H1 (cell line): ENCODE measurements at regions of chr4 and their contacts with region 1.

Region 1: GRCh38 chr4:169152899-169153298 is 117.9 kb downstream of the SH3RF1 start:
- DNase-seq: no peak
- H3K4me3 ChIP-seq: no peak overlapping the region
- H3K27ac ChIP-seq: no peak overlapping the region
- H3K4me1 ChIP-seq: peaks cover 0 to 3% (median 0%) of the 10 kb centered on the region in 4 experiments; a peak in 1 of 7 replicates
- H3K27me3 ChIP-seq: no peaks in the 10 kb centered on the region
- CTCF ChIP-seq: peak; percentile 35 to 44 (median 38)
- EP300 ChIP-seq: no peak
- POLR2A ChIP-seq: no peak
- RAD21 ChIP-seq: peak; percentile 32 to 54

Region 2: GRCh38 chr4:169139021-169139420 is 13.9 kb before region 1 on chr4:
- CTCF ChIA-PET with region 1: interaction called, 17 read pairs
- POLR2A ChIA-PET with region 1: no interaction called
- DNase-seq: no peak
- H3K4me3 ChIP-seq: no peak overlapping the region
- H3K27ac ChIP-seq: no peak overlapping the region
- H3K4me1 ChIP-seq: peaks cover 0 to 5% (median 3%) of the 10 kb centered on the region in 4 experiments; a peak in 3 of 7 replicates
- H3K27me3 ChIP-seq: no peaks in the 10 kb centered on the region
- CTCF ChIP-seq: no peak
- EP300 ChIP-seq: no peak
- POLR2A ChIP-seq: no peak
- RAD21 ChIP-seq: no peak

Region 3: DNA sequence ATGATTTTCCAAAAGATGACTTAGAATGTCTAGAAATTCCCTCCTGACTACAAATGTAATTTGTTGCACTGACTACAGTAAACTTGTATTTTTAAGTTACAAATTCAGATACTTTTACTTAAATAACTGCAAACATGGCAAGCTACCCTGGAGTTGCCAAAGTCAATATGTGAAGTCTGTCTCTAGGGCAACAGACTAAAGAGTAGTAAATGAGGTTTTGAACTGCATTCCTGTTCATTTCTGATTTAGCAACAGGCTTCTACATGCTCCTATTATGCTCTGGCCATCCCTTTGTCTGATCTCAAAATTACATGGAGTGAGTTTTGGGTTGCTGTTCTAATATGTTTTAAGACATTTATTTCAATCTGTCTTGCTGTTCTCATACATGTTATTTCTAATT is 90.9 kb after region 1 on chr4:
- CTCF ChIA-PET with region 1: no interaction called
- POLR2A ChIA-PET with region 1: no interaction called
- DNase-seq: no peak
- H3K4me3 ChIP-seq: no peak overlapping the region
- H3K27ac ChIP-seq: no peak overlapping the region; the same call in 1 of the 2 replicates
- H3K4me1 ChIP-seq: peaks cover 0 to 5% (median 4%) of the 10 kb centered on the region in 4 experiments; a peak in 3 of 7 replicates
- H3K27me3 ChIP-seq: no peaks in the 10 kb centered on the region
- CTCF ChIP-seq: no peak
- EP300 ChIP-seq: no peak
- POLR2A ChIP-seq: no peak
- RAD21 ChIP-seq: no peak